Heart left ventricle (tissue), 16 donors: ENCODE measurements at regions of chr18 and their contacts with region 1.

Region 1: GRCh38 chr18:63963615-63964256 is 6.1 kb upstream of the SERPINB8 start:
- DNase-seq: peak in 1 of 5 donors; percentile 39
- ATAC-seq: peak in 2 of 4 donors; percentile 59 to 62
- H3K4me3 ChIP-seq: no peak overlapping the region
- H3K27ac ChIP-seq: no peak overlapping the region
- H3K4me1 ChIP-seq: no peaks in the 10 kb centered on the region
- H3K27me3 ChIP-seq: peaks cover 0 to 8% (median 0%) of the 10 kb centered on the region in 9 donors
- CTCF ChIP-seq: peak; percentile 63 to 88 (median 78)
- POLR2A ChIP-seq: no peak

Region 2: GRCh38 chr18:63979409-63979920 is 15.7 kb after region 1 on chr18:
- intact Hi-C with region 1: loop called in 2 of 10 experiments (anchors 1 kb)
- DNase-seq: peak in 2 of 5 donors; percentile 34 to 43
- ATAC-seq: peak in 3 of 4 donors; percentile 75 to 78 (median 78)
- H3K4me3 ChIP-seq: peak overlapping the region in 7 of 12 donors; percentile 0 to 46 (median 20)
- H3K27ac ChIP-seq: peak overlapping the region in 4 of 12 donors; percentile 8 to 58 (median 24)
- H3K4me1 ChIP-seq: peaks cover 0 to 34% (median 3%) of the 10 kb centered on the region in 12 donors
- H3K27me3 ChIP-seq: no peaks in the 10 kb centered on the region
- CTCF ChIP-seq: peak; percentile 67 to 91 (median 84)
- POLR2A ChIP-seq: no peak

Region 3: DNA sequence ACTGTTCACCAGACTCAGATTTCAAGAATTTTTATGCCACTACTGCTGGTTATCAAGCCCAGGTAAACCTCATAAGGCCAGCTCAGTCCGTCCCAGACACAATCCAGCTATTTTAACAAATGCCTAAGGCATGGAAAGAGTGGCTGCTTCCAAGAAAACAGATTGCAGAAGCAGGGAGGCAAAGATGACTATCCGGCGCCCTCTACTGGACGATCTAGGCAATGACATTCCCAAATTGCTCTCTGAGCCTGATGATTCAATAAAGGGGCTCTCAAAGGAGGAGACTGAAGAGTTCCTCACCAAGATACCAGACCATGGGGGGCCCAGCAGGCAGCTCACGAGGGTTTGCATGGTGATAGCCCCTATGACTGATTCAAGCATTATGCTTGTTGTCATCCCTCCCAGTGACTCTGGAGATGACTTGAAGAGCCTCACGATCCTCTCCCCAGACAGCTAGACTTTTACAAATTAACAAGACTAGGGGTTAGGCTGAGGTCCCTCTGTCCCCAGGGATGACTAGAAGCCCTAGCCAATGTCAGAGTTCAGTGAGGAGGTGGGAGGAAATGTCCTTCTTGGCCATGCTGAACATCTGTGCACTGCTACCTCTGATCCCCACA is 31.2 kb after region 1 on chr18:
- intact Hi-C with region 1: loop called in 1 of 10 experiments (anchors 5 kb)
- DNase-seq: peak in 1 of 5 donors; percentile 44
- ATAC-seq: peak in 2 of 4 donors; percentile 50 to 52
- H3K4me3 ChIP-seq: no peak overlapping the region
- H3K27ac ChIP-seq: no peak overlapping the region
- H3K4me1 ChIP-seq: no peaks in the 10 kb centered on the region
- H3K27me3 ChIP-seq: no peaks in the 10 kb centered on the region
- CTCF ChIP-seq: peak; percentile 77 to 91 (median 82)
- POLR2A ChIP-seq: no peak

Region 4: GRCh38 chr18:64042728-64043358 is 79.1 kb after region 1 on chr18:
- intact Hi-C with region 1: no loop called
- DNase-seq: no peak
- ATAC-seq: no peak
- H3K4me3 ChIP-seq: no peak overlapping the region
- H3K27ac ChIP-seq: no peak overlapping the region
- H3K4me1 ChIP-seq: no peaks in the 10 kb centered on the region
- H3K27me3 ChIP-seq: no peaks in the 10 kb centered on the region
- CTCF ChIP-seq: no peak
- POLR2A ChIP-seq: no peak

Region 5: DNA sequence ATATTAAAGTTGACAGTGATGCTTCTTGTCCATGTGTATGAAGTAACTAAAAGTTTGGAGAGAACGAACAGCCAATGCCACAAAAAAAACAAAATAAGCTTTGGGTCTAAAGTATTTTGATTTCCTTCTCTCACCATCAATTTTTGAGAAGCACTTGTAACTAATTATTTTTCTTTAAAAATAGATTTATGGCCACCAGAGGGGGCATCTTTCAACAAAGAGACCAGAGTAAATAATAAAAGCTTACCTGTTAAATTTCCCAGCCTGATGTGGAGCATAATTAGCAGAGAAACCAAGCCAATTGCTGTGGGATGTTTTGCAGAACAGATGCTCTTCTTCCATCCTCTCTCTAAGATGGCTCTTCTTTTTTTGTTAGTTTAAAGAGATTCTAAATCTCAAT is 156.2 kb after region 1 on chr18:
- intact Hi-C with region 1: no loop called
- DNase-seq: no peak
- ATAC-seq: no peak
- H3K4me3 ChIP-seq: no peak overlapping the region
- H3K27ac ChIP-seq: no peak overlapping the region
- H3K4me1 ChIP-seq: no peaks in the 10 kb centered on the region
- H3K27me3 ChIP-seq: no peaks in the 10 kb centered on the region
- CTCF ChIP-seq: peak in 5 of 12 donors; percentile 13 to 33 (median 22)
- POLR2A ChIP-seq: no peak